GM18951 (cell line): ENCODE measurements at regions of chr10 and their contacts with region 1.

Region 1: DNA sequence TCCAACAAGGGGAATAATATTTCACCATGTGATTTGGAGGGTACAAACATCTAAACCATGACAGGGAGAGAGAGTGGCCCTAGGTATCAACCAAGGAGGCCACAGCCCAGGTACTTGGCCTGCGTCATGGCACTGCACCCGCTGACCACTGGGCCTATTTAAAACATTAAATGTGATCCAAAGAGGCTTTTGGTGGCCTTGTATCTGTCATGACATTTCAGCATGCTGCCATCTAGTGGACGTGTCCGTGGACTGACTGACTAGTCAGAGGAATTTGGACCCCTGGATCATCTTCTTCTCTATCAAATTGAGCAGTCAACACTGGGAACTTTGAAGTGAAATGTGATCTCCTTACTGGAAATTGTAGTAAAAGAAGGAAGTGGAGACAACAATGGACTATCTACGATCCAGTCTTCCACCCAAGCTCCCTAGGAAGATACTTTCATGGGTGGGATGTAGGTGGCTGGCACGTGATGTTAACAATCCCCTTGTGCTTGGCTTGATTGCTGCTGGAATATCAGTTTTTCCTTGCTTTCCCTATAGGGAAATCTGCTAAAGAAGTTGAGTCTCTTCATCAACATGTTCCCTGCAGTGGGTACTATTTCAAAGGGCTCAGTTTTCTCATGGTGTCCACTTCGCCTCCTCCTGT is 24.6 kb upstream of the ITGA8 start:
- POLR2A ChIP-seq: no peak

Region 2: GRCh38 chr10:15433850-15434537 is 310.3 kb before region 1 on chr10:
- in situ Hi-C with region 1: loop called (anchors 25 kb)
- POLR2A ChIP-seq: no peak

Region 3: GRCh38 chr10:15859906-15860691 is 115.8 kb after region 1 on chr10 and contains the start of gene MINDY3:
- in situ Hi-C with region 1: no loop called
- POLR2A ChIP-seq: peak; percentile 78